Caco-2 (cell line): ENCODE measurements at regions of chr17 and their contacts with region 1.

Region 1: GRCh38 chr17:48429638-48430586 is at the start of gene SKAP1:
- DNase-seq: peak; percentile 58
- H3K4me3 ChIP-seq: peak within 1 kb of the TSS; percentile 29
- H3K4me3 Mint-ChIP-seq: peak within 1 kb of the TSS; percentile 69
- H3K27ac Mint-ChIP-seq: peak within 1 kb of the TSS; percentile 16
- H3K4me1 ChIP-seq: peaks cover 26% of the 10 kb centered on the region
- H3K4me1 Mint-ChIP-seq: peaks cover 38% of the 10 kb centered on the region
- H3K27me3 ChIP-seq: peaks cover 3% of the 10 kb centered on the region; the same call in 1 of the 2 replicates
- H3K27me3 Mint-ChIP-seq: peaks cover 18% of the 10 kb centered on the region
- CTCF ChIP-seq: no peak
- total RNA-seq, gene SKAP1: 0.70 and 1.5 TPM in 2 replicates

Region 2: DNA sequence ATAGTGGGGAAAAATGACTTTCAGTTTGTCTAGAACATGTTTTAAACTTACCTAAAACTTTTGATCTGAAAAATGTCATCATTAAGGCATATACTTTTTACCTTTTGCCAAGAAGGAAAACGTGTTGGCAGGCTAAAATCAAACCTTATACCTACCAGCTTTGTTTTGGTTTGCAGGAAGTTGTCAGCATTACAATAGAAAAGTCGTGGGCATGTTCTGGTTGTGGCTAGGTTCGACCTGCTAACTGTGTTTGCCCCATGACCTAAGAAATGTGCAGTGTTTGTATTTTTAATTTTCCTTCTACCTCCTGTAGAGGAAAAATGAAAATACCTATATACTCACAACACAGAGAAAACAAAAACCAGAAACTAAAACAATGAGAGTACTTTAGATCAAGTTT is 12.9 kb before region 1 on chr17:
- CTCF ChIA-PET with region 1: no interaction called
- POLR2A ChIA-PET with region 1: no interaction called
- intact Hi-C with region 1: loop called (anchors 1 kb)
- DNase-seq: no peak
- H3K4me3 ChIP-seq: no peak overlapping the region
- H3K4me3 Mint-ChIP-seq: no peak overlapping the region
- H3K27ac Mint-ChIP-seq: no peak overlapping the region
- H3K4me1 ChIP-seq: 0 out of 2 replicates have a peak, but pooled peaks cover 4% of the 10 kb centered on the region
- H3K4me1 Mint-ChIP-seq: no peaks in the 10 kb centered on the region
- H3K27me3 ChIP-seq: peaks cover 1% of the 10 kb centered on the region; the same call in 1 of the 2 replicates
- H3K27me3 Mint-ChIP-seq: peaks cover 29% of the 10 kb centered on the region
- CTCF ChIP-seq: no peak

Region 3: DNA sequence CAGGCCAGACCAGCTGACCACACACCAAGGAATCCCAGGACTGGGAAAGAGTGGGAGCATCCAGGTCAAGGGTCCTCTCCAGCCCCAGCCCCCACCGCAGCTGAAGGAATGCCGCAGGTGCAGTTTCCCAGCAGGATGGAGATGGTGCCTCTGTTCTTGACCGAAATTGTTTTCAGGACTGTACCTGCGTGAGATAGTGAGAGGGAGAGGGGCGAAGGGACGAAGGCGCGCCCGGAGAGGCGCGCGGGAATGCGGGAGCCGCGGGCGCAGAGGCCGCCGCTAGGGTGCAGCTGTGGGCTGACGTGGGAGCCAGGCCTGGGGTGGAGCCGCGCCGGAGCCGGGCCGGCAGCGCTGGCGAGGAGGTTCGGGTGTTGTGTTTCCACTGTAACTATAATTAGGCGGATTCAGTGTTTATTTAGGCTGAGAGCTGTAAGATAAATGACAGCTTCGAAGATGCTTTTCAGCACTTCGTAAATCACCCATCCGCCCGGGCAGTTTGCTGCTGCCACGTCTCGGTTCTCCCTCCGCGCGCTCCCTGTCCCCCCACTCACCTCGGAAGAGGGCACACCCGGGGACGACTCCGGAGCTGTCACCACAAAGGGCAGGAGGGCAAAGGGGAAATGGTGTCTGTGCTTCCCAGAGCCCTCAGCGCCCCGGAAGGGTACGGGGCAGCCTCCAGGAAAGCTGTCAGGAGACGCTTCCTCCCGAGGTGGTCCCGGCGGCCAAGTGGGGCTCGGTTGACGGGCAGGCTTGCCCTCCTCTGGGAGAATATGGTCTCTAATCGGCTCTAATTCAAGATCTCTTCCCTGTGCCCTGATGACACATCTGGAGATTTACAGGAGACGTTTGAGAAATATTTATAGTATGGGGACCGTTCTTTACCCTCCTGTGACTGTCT is 62.7 kb after region 1 on chr17:
- CTCF ChIA-PET with region 1: no interaction called
- POLR2A ChIA-PET with region 1: no interaction called
- intact Hi-C with region 1: loop called (anchors 2 kb)
- DNase-seq: peak; percentile 80 to 91
- H3K4me3 ChIP-seq: peak overlapping the region; percentile 15
- H3K4me3 Mint-ChIP-seq: peak overlapping the region; percentile 52
- H3K27ac Mint-ChIP-seq: no peak overlapping the region
- H3K4me1 ChIP-seq: peaks cover 14% of the 10 kb centered on the region
- H3K4me1 Mint-ChIP-seq: peaks cover 9% of the 10 kb centered on the region
- H3K27me3 ChIP-seq: peaks cover 5% of the 10 kb centered on the region; the same call in 1 of the 2 replicates
- H3K27me3 Mint-ChIP-seq: peaks cover 8% of the 10 kb centered on the region
- CTCF ChIP-seq: peak; percentile 99